ENCODE measurements at regions of chr16 and their contacts with region 1.

Region 1: DNA sequence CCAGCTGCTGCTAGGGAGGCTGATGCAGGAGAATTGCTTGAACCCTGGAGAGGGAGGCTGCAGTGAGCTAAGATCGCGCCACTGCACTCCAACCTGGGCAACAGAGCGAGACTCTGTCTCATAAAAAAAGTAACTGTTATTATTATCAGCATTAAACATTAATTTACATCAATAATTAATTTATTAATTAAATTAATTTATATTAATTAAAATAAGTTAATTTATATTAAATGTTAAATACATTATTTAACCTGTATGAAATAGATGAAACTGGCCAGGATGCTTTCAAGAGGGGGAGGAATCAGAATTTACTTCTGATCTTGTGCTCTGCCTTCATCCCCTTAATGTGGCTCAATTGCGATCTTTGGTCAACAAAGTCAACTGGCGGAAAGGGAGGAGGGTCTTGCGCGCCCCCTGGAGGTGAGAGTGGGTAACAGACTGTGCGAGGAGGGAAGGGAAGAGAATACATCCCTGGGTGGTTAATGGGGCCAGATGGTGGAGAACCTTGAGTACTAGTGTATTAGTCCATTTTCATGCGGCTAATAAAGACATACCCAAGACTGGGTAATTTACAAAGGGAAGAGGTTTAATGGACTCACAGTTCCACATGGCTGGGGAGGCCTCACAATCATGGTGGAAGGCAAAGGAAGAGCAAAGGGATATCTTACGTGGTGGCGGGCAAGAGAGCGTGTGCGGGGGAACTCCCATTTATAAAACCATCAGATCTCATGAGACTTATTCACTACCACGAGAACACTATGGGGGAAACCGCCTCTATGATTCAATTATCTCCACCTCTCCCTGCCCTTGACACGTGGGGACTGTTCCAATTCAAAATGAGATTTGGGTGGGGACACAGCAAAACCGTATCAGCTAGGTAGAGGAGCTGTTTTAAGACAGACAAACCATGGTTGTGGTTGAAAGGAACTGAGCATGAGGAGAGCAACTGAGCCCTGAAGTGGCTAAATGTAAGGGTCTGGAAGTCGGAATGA is 15.7 kb upstream of the CPPED1 start:
- DNase-seq: peak; percentile 81
- H3K4me3 ChIP-seq: no peak overlapping the region
- H3K27ac ChIP-seq: no peak overlapping the region
- H3K4me1 ChIP-seq: peaks cover 15% of the 10 kb centered on the region
- CTCF ChIP-seq: peak; percentile 94

Region 2: DNA sequence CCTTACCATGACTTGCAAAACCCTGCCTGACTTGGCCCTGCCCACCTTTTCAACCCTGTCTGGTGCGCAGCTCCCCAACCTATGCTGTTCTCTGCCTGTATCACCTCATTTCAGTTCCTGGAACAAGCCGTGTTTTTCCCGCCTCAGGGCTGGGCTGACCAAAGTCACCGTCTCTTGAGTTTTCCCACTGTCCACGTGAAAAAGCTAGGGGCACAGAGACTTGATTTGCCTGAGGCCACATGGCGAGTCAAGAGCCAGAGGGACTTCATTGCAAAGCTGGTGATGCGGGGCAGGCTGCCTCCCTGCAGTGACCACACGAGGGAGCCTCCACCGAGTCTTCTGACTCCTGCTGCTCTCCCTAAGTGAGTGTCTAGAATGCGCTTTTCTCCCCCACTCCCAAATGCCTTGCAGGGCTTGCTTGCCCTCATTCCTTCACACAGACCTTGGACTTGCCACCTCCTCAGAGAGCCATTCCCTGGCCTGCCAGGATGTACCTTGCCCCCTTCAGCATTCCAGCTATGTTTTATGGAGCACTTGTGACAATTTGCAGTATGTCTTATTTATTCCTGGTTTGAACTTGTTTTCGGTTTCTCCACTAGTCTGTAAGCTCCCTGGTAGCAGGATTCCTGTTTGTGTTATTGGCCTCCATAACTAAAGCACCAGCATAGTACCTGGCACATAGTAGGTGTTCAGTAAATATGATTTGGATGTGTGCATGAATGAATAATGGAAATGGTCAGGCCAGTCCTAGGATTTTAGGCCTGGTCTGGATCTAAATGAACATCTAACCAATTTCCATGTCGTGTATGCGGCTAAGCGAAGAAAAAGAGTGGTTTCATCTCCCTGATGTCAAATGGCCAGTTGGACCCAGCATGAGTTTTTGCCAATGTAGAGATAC is 590.6 kb before region 1 on chr16:
- CTCF ChIA-PET with region 1: no interaction called
- POLR2A ChIA-PET with region 1: no interaction called
- intact Hi-C with region 1: loop called (anchors 5 kb)
- DNase-seq: peak; percentile 89
- H3K4me3 ChIP-seq: no peak overlapping the region
- H3K27ac ChIP-seq: peak overlapping the region; percentile 66
- H3K4me1 ChIP-seq: peaks cover 71% of the 10 kb centered on the region
- CTCF ChIP-seq: peak; percentile 96

Region 3: DNA sequence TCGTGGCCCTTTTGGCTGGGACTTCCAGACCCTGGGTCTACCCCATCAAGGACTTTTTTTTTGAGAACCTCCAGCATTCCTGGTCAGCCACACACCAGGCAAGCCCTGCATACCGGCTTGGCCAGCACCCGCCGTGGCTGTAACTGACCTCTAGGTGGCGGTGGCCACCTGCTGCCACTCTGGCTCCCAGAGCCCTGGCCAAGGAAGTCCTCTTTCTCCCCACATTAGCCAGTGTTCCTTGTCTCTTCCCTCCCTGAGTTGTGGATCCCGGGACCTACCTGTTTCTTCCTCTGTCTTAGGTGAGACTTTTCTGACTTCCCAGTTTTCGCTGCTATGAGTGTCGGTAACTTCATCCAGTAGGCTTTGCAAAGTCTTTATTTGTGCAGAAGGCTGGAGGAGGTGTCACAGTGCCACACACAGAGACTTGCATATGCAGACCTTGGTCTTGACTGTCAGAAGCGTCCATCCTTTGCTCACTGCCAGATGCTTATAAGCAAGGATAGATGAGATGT is 364.1 kb before region 1 on chr16:
- CTCF ChIA-PET with region 1: no interaction called
- POLR2A ChIA-PET with region 1: interaction called, 6 read pairs
- intact Hi-C with region 1: loop called (anchors 5 kb)
- DNase-seq: peak; percentile 61
- H3K4me3 ChIP-seq: no peak overlapping the region
- H3K27ac ChIP-seq: no peak overlapping the region
- H3K4me1 ChIP-seq: peaks cover 14% of the 10 kb centered on the region
- CTCF ChIP-seq: peak; percentile 95

Region 4: GRCh38 chr16:12573730-12574383 is 245.6 kb before region 1 on chr16:
- CTCF ChIA-PET with region 1: interaction called, 3 read pairs
- POLR2A ChIA-PET with region 1: no interaction called
- intact Hi-C with region 1: loop called (anchors 2 kb)
- DNase-seq: peak; percentile 66
- H3K4me3 ChIP-seq: no peak overlapping the region
- H3K27ac ChIP-seq: peak overlapping the region; percentile 51
- H3K4me1 ChIP-seq: peaks cover 59% of the 10 kb centered on the region
- CTCF ChIP-seq: peak; percentile 99

Region 5: DNA sequence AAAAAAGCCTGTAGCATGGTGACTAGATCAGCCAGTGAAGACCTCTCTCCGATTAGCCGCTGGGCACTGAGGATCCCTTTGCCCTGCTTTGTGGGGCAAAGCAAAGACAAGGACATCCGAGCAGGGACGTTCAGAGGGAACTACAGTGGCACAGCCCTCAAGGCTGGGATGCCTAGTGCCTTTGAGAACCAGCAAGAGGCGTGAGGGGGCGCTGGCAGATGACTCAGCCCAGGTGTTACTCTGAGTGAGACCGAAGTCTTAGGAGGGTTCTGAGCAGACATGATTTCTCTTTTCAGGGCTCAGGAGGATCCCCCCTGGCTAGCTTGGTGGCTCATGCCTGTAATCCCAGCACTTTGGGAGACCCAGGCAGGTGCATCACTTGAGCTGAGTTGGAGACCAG is 194.4 kb before region 1 on chr16:
- CTCF ChIA-PET with region 1: no interaction called
- POLR2A ChIA-PET with region 1: no interaction called
- intact Hi-C with region 1: loop called (anchors 10 kb)
- DNase-seq: no peak
- H3K4me3 ChIP-seq: no peak overlapping the region
- H3K27ac ChIP-seq: no peak overlapping the region
- H3K4me1 ChIP-seq: peaks cover 3% of the 10 kb centered on the region
- CTCF ChIP-seq: peak; percentile 33; the same call in 1 of the 2 replicates

Region 6: GRCh38 chr16:12685806-12686205 is 133.6 kb before region 1 on chr16:
- CTCF ChIA-PET with region 1: no interaction called
- POLR2A ChIA-PET with region 1: no interaction called
- intact Hi-C with region 1: no loop called
- DNase-seq: no peak
- H3K4me3 ChIP-seq: no peak overlapping the region
- H3K27ac ChIP-seq: no peak overlapping the region
- H3K4me1 ChIP-seq: no peaks in the 10 kb centered on the region
- CTCF ChIP-seq: no peak